Naive thymus-derived CD8-positive, alpha-beta T cell (primary cell): ENCODE measurements at regions of chr12 and their contacts with region 1.

Region 1: DNA sequence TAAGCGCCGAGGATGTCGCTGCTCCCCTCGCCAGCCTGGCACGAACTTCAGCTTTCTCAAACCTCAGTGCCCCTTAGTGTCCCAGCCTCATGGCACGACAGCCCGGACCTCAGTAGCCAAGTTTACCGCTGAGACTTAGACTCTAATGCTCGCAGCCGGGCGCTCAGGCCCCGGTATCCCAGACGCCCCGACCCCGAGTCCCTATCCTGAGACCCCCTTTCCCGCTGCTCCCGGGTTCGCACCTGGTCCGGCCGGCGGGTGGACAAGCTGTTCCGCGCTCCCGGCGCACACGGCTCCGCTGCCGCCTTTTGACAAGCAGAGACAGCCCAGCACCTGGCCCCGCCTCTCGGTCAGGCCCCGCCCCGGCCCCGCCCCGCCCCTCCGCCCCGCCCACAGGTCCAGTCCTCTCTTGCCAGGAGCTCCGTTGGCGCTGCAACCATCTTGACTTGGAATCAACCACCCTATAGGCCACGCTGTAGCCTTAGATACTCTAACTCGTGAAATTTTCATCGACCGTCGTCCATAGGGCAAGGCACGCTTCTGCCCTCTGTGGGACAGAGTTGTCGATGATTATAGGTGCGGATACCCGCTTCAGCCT is at the start of gene VDR:
- DNase-seq: peak; percentile 33 to 76 (median 61)
- ATAC-seq: peak; percentile 71 to 77
- H3K4me3 Mint-ChIP-seq: peak within 1 kb of the TSS; percentile 86 to 96 (median 90)
- H3K27ac Mint-ChIP-seq: peak within 1 kb of the TSS in 9 of 10 donors; percentile 13 to 87 (median 61)
- H3K4me1 Mint-ChIP-seq: peaks cover 27 to 54% (median 49%) of the 10 kb centered on the region in 4 donors
- H3K27me3 Mint-ChIP-seq: peaks cover 0 to 8% (median 0%) of the 10 kb centered on the region in 5 donors
- polyA plus RNA-seq, gene VDR: not detected

Region 2: GRCh38 chr12:47882781-47883546 is 21.8 kb before region 1 on chr12:
- POLR2A ChIA-PET with region 1: interaction called, 20 read pairs
- DNase-seq: peak in 4 of 10 donors; percentile 16 to 51 (median 40)
- ATAC-seq: peak; percentile 74 to 85
- H3K4me3 Mint-ChIP-seq: peak overlapping the region; percentile 73 to 91 (median 87)
- H3K27ac Mint-ChIP-seq: peak overlapping the region in 9 of 10 donors; percentile 45 to 94 (median 89)
- H3K4me1 Mint-ChIP-seq: peaks cover 31 to 55% (median 42%) of the 10 kb centered on the region in 4 donors
- H3K27me3 Mint-ChIP-seq: peaks cover 0 to 6% (median 0%) of the 10 kb centered on the region in 5 donors

Region 3: DNA sequence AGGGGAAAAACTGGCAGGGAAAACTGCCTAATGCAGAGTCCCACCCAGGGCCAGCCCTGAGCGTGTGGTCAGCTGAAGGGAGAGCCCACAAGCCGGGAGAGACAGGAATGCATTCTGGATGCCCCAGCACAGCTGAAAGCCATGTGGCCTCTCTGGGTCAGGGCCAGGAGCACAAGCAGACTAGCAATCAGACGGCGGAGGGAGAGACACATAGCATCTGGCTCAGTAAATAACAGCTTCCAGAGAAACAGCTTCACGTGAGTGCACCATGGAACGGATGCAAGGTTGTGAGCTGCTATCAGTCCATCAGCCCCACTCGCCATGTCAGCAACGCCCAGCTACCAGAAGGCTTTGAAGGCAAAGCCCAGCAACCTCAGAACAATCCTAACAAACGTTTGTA is 30.4 kb after region 1 on chr12:
- POLR2A ChIA-PET with region 1: no interaction called
- DNase-seq: no peak
- ATAC-seq: no peak
- H3K4me3 Mint-ChIP-seq: no peak overlapping the region
- H3K27ac Mint-ChIP-seq: no peak overlapping the region
- H3K4me1 Mint-ChIP-seq: peaks cover 0 to 2% (median 0%) of the 10 kb centered on the region in 4 donors
- H3K27me3 Mint-ChIP-seq: peaks cover 0 to 17% (median 3%) of the 10 kb centered on the region in 5 donors

Region 4: GRCh38 chr12:47949441-47950308 is 44.9 kb after region 1 on chr12:
- POLR2A ChIA-PET with region 1: no interaction called
- DNase-seq: peak in 7 of 10 donors; percentile 12 to 42 (median 33)
- ATAC-seq: peak; percentile 53 to 72
- H3K4me3 Mint-ChIP-seq: no peak overlapping the region
- H3K27ac Mint-ChIP-seq: peak overlapping the region in 2 of 10 donors; percentile 11 to 55
- H3K4me1 Mint-ChIP-seq: peaks cover 0 to 14% (median 3%) of the 10 kb centered on the region in 4 donors
- H3K27me3 Mint-ChIP-seq: peaks cover 2 to 22% (median 7%) of the 10 kb centered on the region in 5 donors